ENCODE measurements at regions of chr2 and their contacts with region 1.

Region 1: DNA sequence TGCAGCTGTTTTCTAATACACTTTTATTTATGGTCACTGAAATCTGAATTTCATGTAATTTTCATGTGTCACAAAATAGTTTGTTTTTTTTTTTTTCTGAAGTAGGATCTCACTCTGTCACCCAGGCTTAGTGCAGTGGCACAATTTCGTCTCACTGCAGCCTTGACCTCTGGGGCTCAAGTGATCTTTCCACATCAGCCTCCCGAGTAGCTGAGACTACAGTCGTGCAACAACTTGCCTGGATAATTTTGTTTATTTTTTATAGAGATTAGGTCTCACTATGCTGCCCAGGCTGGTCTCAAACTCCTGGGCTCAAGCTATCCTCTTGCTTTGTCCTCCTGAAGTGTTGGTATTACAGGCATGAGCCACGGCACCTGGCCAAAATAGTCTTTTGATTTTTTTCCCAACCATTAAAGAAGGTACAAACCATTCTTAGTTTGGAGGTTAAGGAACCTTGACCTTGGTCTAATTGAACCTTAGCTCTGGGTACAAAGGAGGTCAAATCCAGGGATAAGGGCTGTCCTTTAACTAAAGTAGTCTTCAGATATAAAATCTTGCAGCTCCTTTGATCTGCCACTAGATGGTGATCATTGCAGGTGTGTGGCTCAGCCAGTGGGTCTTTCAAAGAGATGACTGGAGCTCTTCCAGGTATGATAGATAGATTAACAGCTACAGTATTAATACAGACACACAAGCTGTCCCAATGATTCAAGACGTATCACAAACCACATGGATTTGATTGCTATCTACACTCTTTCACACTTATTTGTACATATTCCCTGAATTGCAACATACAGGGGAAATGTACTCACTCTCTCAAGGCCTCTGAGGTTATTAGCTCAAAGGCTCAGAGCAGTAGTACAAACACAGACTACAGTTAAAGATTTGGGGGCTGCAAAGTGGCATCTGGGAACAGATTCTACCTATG is 4.7 kb upstream of the KRCC1 start:
- DNase-seq: no peak
- H3K4me3 ChIP-seq: no peak overlapping the region
- CTCF ChIP-seq: peak; percentile 54

Region 2: DNA sequence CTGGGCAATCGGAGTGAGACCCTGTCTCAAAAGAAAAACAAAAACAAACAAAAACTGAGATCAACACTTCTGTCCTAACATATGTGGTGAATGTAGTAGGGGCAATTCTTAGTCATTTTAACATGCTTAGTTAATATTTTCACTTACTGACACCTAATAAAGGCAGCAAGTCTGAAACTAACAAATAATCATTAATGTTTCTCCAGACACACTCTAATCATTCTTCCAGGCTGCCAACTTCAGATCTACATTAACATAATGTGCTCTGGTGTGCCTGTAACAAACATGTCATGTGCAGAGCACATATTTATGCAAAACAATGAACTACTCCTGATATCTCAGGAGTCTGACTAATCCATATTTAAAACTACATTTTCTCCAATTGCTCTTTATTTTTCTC is 10.6 kb before region 1 on chr2:
- CTCF ChIA-PET with region 1: interaction called, 48 read pairs
- POLR2A ChIA-PET with region 1: no interaction called
- DNase-seq: no peak
- H3K4me3 ChIP-seq: no peak overlapping the region
- CTCF ChIP-seq: no peak

Region 3: GRCh38 chr2:88082781-88083180 is 22.5 kb after region 1 on chr2:
- CTCF ChIA-PET with region 1: interaction called, 45 read pairs
- POLR2A ChIA-PET with region 1: no interaction called
- DNase-seq: no peak
- H3K4me3 ChIP-seq: no peak overlapping the region
- CTCF ChIP-seq: no peak

Region 4: DNA sequence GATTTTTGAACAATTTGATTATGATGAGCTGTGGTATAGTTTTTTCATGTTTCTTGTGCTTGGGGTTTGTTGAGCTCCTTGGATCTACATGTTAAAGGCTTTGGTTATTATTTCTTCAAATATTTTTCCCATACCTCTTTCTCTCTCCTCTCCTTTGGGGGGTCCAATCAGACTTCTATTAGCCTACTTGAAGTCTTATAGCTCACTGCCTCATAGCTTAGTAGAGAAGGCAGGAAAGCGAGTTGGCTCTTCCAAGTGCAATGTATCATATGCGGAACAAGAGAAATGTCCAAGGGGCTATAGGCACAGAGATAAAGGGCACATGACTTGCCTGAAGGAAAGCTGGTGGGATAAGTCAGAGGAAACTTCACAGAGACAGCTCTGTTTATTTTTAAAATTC is 81.7 kb after region 1 on chr2:
- CTCF ChIA-PET with region 1: interaction called, 10 read pairs
- POLR2A ChIA-PET with region 1: no interaction called
- DNase-seq: no peak
- H3K4me3 ChIP-seq: no peak overlapping the region
- CTCF ChIP-seq: no peak

Region 5: GRCh38 chr2:88170472-88170892 is 110.2 kb after region 1 on chr2:
- CTCF ChIA-PET with region 1: interaction called, 247 read pairs
- POLR2A ChIA-PET with region 1: interaction called, 3 read pairs
- DNase-seq: no peak
- H3K4me3 ChIP-seq: peak overlapping the region; percentile 59
- CTCF ChIP-seq: no peak

Region 6: DNA sequence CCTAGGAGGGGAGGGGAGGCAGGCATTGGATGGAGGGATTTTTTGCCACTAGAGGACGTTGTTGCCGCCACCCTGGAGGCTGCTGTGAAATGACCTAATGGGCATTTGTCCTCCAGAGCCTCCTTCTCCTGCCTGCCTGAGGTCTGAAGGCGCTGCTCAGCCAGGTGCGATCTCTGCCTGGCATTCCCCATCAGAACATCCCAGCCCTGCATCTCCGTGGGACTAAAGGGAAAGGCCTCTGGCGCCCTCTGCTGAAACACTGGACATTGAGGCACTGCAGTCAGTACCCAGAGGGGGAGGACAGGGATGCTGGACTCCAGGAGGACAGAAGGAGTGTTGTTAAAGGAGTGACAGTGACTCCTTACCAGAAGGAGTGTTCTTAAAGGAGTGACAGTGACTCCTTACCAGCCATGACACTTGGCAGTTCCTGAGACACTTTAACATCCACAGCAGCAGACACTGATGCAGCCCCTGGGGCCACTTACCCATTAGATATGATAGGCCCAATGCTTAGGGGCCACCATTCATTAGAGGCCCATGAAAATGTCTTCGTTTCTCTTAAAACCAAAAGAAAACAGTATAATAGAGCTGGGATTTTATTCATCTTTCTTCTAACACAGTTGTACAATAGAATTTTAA is 126.9 kb after region 1 on chr2:
- CTCF ChIA-PET with region 1: interaction called, 40 read pairs
- POLR2A ChIA-PET with region 1: interaction called, 3 read pairs
- DNase-seq: no peak
- H3K4me3 ChIP-seq: no peak overlapping the region
- CTCF ChIP-seq: peak; percentile 78

Measured in AG04449 (cell line).